Breast epithelium (tissue), 4 donors: ENCODE measurements at regions of chr22 and their contacts with region 1.

Region 1: GRCh38 chr22:17411213-17411612 is 42.0 kb downstream of the CECR2 start:
- DNase-seq: no peak
- H3K4me3 ChIP-seq: no peak overlapping the region
- H3K27ac ChIP-seq: no peak overlapping the region
- H3K4me1 ChIP-seq: no peaks in the 10 kb centered on the region
- H3K27me3 ChIP-seq: no peaks in the 10 kb centered on the region
- CTCF ChIP-seq: no peak
- POLR2A ChIP-seq: no peak

Region 2: GRCh38 chr22:17491090-17491640 is 80.0 kb after region 1 on chr22:
- intact Hi-C with region 1: loop called (anchors 2 kb)
- DNase-seq: no peak
- H3K4me3 ChIP-seq: no peak overlapping the region
- H3K27ac ChIP-seq: no peak overlapping the region
- H3K4me1 ChIP-seq: no peaks in the 10 kb centered on the region
- H3K27me3 ChIP-seq: no peaks in the 10 kb centered on the region
- CTCF ChIP-seq: no peak
- POLR2A ChIP-seq: no peak